CD8-positive, alpha-beta memory T cell (primary cell): ENCODE measurements at regions of chr17 and their contacts with region 1.

Region 1: GRCh38 chr17:76182016-76182764 is 41.1 kb upstream of the FOXJ1 start:
- DNase-seq: peak; percentile 84 to 94 (median 85)
- H3K4me3 ChIP-seq: peak overlapping the region; percentile 38
- H3K4me3 Mint-ChIP-seq: peak overlapping the region; percentile 14 to 73 (median 49)
- H3K27ac ChIP-seq: no peak overlapping the region
- H3K27ac Mint-ChIP-seq: peak overlapping the region; percentile 88 to 96 (median 92)
- H3K4me1 ChIP-seq: peaks cover 70% of the 10 kb centered on the region
- H3K4me1 Mint-ChIP-seq: peaks cover 42 to 66% (median 49%) of the 10 kb centered on the region in 3 donors
- H3K27me3 ChIP-seq: no peaks in the 10 kb centered on the region
- H3K27me3 Mint-ChIP-seq: no peaks in the 10 kb centered on the region

Region 2: DNA sequence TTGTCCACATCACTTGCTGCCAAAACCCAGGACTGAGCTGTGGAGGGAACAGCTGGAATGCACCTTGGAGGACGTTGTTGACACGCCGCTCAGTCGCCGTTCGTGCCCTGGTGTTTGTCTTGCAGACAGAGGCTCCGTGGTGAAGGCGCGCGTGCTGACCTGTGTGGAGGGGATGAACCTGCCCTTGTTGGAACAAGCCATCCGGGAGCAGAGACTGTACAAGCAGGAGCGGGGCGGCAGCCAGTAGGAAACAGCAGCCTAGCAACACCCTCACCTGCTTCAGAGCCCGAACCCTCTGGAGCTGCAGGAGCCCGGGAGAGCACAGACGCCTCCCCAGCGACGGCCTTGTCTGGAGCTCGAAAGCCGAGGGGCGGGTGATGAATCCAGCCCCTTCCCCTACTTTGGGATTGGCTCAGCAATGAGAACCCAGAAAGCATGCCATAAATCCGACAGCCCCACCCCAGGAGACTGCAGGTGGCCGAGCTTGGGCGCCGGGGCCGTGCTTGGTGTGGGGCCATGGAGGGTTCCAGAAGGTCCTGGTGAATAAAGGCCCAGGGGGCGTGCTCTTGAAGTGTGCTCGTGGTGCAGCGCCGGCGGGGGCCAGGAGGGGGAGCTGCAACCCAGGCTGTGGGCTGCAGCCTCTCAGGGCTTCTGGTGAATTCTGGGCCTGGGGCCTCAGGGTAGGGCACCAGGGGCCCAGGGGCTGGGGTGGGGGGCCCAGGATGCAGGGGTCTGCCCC is 182.0 kb before region 1 on chr17:
- CTCF ChIA-PET with region 1: no interaction called
- POLR2A ChIA-PET with region 1: no interaction called
- DNase-seq: peak; percentile 36 to 67 (median 51)
- H3K4me3 ChIP-seq: no peak overlapping the region
- H3K4me3 Mint-ChIP-seq: no peak overlapping the region
- H3K27ac ChIP-seq: no peak overlapping the region
- H3K27ac Mint-ChIP-seq: no peak overlapping the region
- H3K4me1 ChIP-seq: peaks cover 12% of the 10 kb centered on the region
- H3K4me1 Mint-ChIP-seq: peaks cover 11 to 14% (median 12%) of the 10 kb centered on the region in 3 donors
- H3K27me3 ChIP-seq: no peaks in the 10 kb centered on the region
- H3K27me3 Mint-ChIP-seq: no peaks in the 10 kb centered on the region

Region 3: DNA sequence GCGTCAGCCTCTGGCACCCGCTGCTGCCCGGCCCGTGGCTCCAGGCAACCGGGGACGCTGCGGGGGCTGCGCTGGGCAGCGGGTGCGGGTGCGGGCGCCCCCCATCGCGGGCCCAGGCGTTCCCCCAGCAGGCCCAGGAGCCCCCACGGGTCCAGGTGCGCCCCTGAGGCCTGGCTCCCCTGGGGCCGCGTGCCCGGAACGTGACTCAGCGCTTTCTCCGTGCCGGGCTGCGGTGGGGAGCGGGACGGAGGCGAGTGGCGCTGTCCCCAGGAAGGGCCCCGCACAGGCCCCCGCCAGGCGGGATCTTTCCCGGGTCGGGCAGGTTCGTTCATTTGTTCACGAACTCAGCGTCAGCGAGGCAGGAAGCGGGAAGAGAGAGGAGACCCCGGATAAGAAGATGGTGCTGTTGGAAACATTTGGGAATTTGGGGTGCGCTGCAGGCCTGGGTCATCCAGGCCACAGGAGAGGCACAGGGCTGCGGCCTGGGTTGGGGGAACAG is 60.2 kb before region 1 on chr17:
- CTCF ChIA-PET with region 1: interaction called, 47 read pairs
- POLR2A ChIA-PET with region 1: interaction called, 11 read pairs
- DNase-seq: peak in 1 of 5 donors; percentile 26
- H3K4me3 ChIP-seq: peak overlapping the region; percentile 45
- H3K4me3 Mint-ChIP-seq: peak overlapping the region in 3 of 7 donors; percentile 44 to 82 (median 46)
- H3K27ac ChIP-seq: no peak overlapping the region
- H3K27ac Mint-ChIP-seq: peak overlapping the region in 1 of 8 donors; percentile 61
- H3K4me1 ChIP-seq: peaks cover 6% of the 10 kb centered on the region
- H3K4me1 Mint-ChIP-seq: peaks cover 3 to 15% (median 5%) of the 10 kb centered on the region in 3 donors
- H3K27me3 ChIP-seq: no peaks in the 10 kb centered on the region
- H3K27me3 Mint-ChIP-seq: no peaks in the 10 kb centered on the region

Region 4: GRCh38 chr17:76153640-76154039 is 28.6 kb before region 1 on chr17:
- CTCF ChIA-PET with region 1: interaction called, 47 read pairs
- POLR2A ChIA-PET with region 1: no interaction called
- DNase-seq: no peak
- H3K4me3 ChIP-seq: no peak overlapping the region
- H3K4me3 Mint-ChIP-seq: peak overlapping the region in 1 of 7 donors; percentile 41
- H3K27ac ChIP-seq: no peak overlapping the region
- H3K27ac Mint-ChIP-seq: peak overlapping the region in 5 of 8 donors; percentile 62 to 89 (median 73)
- H3K4me1 ChIP-seq: peaks cover 27% of the 10 kb centered on the region
- H3K4me1 Mint-ChIP-seq: peaks cover 37 to 44% (median 42%) of the 10 kb centered on the region in 3 donors
- H3K27me3 ChIP-seq: no peaks in the 10 kb centered on the region
- H3K27me3 Mint-ChIP-seq: peaks cover 0 to 1% of the 10 kb centered on the region in 2 donors

Region 5: DNA sequence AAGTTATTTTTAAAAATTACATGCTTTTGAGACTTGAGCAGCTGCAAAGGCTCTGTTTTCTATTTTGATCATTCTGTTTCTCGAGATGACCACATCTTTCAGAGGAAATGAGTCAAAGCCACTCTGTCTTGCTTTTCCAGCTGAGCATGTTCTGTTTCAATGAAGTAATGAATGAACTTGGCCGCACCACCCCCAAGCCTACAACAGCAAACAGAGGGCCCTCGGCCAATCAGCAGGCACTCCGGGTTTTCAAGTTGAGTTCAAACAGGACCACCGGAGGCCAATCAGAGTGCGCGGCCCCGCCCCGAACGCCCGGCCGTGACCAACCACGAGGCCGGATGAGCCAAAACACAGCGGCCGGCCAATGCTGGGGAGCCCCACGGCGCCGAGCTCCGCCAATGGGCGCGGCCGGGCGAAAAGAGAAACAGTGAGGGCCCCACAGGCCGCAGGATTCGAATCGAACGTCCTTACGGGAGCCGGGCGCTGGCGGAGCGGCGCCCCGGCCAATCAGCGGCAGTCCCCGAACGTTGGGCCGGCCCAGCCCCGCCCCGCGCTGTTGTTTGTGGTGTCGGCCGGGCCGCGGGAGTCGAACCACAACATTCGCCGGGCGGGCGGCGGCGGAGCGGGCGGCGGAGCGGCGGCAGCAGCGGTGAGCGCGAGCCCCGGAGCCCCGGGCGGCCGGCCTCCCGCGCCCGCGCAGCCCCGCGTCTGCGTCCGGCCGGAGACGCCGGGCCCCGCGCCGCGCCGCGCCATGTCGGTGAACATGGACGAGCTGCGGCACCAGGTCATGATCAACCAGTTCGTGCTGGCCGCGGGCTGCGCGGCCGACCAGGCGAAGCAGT is 82.8 kb after region 1 on chr17 and contains the start of gene UBALD2:
- CTCF ChIA-PET with region 1: interaction called, 50 read pairs
- POLR2A ChIA-PET with region 1: interaction called, 15 read pairs
- DNase-seq: peak; percentile 97 to 99 (median 99)
- H3K4me3 ChIP-seq: peak within 1 kb of the TSS; percentile 87
- H3K4me3 Mint-ChIP-seq: peak within 1 kb of the TSS; percentile 88 to 96 (median 91)
- H3K27ac ChIP-seq: peak within 1 kb of the TSS; percentile 79
- H3K27ac Mint-ChIP-seq: peak within 1 kb of the TSS; percentile 90 to 100 (median 96)
- H3K4me1 ChIP-seq: peaks cover 69% of the 10 kb centered on the region
- H3K4me1 Mint-ChIP-seq: peaks cover 57 to 70% (median 57%) of the 10 kb centered on the region in 3 donors
- H3K27me3 ChIP-seq: no peaks in the 10 kb centered on the region
- H3K27me3 Mint-ChIP-seq: no peaks in the 10 kb centered on the region
- total RNA-seq, gene UBALD2: 125 to 133 TPM

Region 6: DNA sequence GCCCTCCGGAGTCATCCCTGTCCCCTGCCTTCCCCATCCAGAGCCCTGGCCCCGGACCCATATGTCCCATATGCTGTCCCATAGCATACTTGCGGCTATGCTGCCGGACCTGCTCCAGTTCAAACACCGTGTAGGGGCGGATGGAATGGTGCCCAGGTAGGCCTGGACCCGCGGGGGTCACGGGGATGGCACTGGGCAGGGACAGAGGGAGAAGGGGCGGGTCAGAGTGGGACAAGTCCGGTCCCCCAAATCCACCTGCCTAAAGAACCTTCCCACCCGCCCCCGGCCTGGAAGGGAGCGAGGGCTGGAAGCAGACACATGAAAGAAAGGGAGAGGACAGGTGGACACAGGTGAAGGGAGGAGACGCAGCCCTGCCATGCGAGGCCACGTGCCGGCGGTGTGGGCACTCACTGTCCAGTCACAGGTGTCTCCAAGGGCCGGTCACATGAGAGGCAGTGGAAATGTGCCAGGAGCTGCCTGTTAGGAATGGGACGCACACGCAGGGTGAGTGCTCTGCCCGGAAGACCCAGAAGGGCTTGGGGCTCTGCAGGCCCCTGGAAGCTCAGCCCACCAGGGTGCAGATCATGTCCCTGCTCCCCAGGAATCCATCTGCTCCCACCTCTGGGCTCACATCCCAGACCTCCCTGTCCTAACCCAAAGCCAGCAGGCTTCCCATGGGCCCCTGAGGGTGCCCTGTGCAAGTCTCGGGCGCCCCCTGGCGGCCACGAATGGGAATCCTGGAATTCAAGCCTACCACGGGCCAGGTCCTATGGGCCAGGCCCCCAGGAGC is 97.0 kb after region 1 on chr17:
- CTCF ChIA-PET with region 1: interaction called, 119 read pairs
- POLR2A ChIA-PET with region 1: interaction called, 11 read pairs
- DNase-seq: peak; percentile 74 to 90 (median 80)
- H3K4me3 ChIP-seq: no peak overlapping the region
- H3K4me3 Mint-ChIP-seq: no peak overlapping the region
- H3K27ac ChIP-seq: no peak overlapping the region
- H3K27ac Mint-ChIP-seq: peak overlapping the region in 2 of 8 donors; percentile 26 to 83
- H3K4me1 ChIP-seq: peaks cover 14% of the 10 kb centered on the region
- H3K4me1 Mint-ChIP-seq: peaks cover 0 to 17% (median 7%) of the 10 kb centered on the region in 3 donors
- H3K27me3 ChIP-seq: no peaks in the 10 kb centered on the region
- H3K27me3 Mint-ChIP-seq: peaks cover 0 to 1% of the 10 kb centered on the region in 2 donors